IMR-90 (cell line): ENCODE measurements at regions of chr1 and their contacts with region 1.

Region 1: GRCh38 chr1:174769961-174770549 is 229.7 kb upstream of the CACYBP start:
- DNase-seq: peak; percentile 60
- ATAC-seq: peak; percentile 72
- H3K4me3 ChIP-seq: no peak overlapping the region
- H3K27ac ChIP-seq: no peak overlapping the region
- H3K4me1 ChIP-seq: no peaks in the 10 kb centered on the region
- H3K27me3 ChIP-seq: no peaks in the 10 kb centered on the region
- CTCF ChIP-seq: peak; percentile 91
- POLR2A ChIP-seq: no peak
- RAD21 ChIP-seq: peak; percentile 87

Region 2: GRCh38 chr1:174982971-174983689 is 213.1 kb after region 1 on chr1:
- CTCF ChIA-PET with region 1: interaction called, 8 read pairs
- POLR2A ChIA-PET with region 1: no interaction called
- dilution Hi-C with region 1: no loop called
- in situ Hi-C with region 1: no loop called
- intact Hi-C with region 1: loop called (anchors 1 kb)
- DNase-seq: peak; percentile 49
- ATAC-seq: peak; percentile 32
- H3K4me3 ChIP-seq: no peak overlapping the region
- H3K27ac ChIP-seq: no peak overlapping the region
- H3K4me1 ChIP-seq: no peaks in the 10 kb centered on the region
- H3K27me3 ChIP-seq: no peaks in the 10 kb centered on the region
- CTCF ChIP-seq: peak; percentile 62
- POLR2A ChIP-seq: no peak
- RAD21 ChIP-seq: peak; percentile 47

Region 3: GRCh38 chr1:174990382-174990999 is 220.4 kb after region 1 on chr1:
- CTCF ChIA-PET with region 1: no interaction called
- POLR2A ChIA-PET with region 1: no interaction called
- dilution Hi-C with region 1: no loop called
- in situ Hi-C with region 1: loop called (anchors 5 kb)
- intact Hi-C with region 1: no loop called
- DNase-seq: peak; percentile 61
- ATAC-seq: peak; percentile 83
- H3K4me3 ChIP-seq: peak overlapping the region; percentile 47; the same call in 1 of the 2 replicates
- H3K27ac ChIP-seq: peak overlapping the region; percentile 33; the same call in 1 of the 2 replicates
- H3K4me1 ChIP-seq: no peaks in the 10 kb centered on the region; the same call in 1 of the 2 replicates
- H3K27me3 ChIP-seq: no peaks in the 10 kb centered on the region
- CTCF ChIP-seq: no peak
- POLR2A ChIP-seq: no peak
- RAD21 ChIP-seq: no peak

Region 4: DNA sequence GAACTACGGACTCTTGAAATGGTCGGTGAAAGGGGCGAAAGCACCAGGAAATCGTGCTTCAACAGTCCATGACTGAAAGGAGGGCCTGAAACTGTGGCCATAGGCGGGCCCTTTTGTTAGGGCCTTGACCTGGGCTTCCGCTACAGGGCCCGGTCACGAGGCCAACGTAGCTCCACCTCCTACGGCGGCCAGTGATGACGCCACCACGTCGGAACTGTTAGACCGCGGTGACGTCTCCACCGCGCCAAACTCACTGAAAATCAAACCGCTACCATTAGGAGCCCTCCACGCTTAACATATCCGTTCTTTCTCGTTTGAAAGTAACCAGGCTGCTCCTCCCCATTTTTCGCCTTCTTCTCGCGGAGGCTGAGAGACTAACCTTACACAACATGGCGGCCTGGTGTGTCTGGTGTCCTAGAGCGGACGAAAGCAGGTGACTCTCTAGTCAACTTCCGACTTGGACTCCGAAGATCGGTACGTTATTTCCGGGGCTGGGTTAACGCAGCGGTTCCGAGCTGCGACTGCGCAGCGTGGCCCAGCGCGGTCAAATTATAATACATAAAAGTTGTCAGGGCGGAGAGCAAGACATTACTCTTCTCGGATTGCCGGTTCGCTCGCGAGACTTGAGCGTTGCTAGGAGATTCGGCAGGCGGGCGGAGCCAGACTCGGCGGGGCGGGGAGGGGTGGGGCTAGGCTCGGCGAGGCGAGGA is 229.3 kb after region 1 on chr1:
- CTCF ChIA-PET with region 1: no interaction called
- POLR2A ChIA-PET with region 1: no interaction called
- dilution Hi-C with region 1: no loop called
- in situ Hi-C with region 1: loop called (anchors 5 kb)
- intact Hi-C with region 1: loop called (anchors 1 kb)
- DNase-seq: peak; percentile 99
- ATAC-seq: peak; percentile 87
- H3K4me3 ChIP-seq: peak overlapping the region; percentile 96
- H3K27ac ChIP-seq: peak overlapping the region; percentile 91
- H3K4me1 ChIP-seq: peaks cover 2% of the 10 kb centered on the region; the same call in 1 of the 2 replicates
- H3K27me3 ChIP-seq: no peaks in the 10 kb centered on the region
- CTCF ChIP-seq: no peak
- POLR2A ChIP-seq: peak; percentile 97
- RAD21 ChIP-seq: no peak

Region 5: DNA sequence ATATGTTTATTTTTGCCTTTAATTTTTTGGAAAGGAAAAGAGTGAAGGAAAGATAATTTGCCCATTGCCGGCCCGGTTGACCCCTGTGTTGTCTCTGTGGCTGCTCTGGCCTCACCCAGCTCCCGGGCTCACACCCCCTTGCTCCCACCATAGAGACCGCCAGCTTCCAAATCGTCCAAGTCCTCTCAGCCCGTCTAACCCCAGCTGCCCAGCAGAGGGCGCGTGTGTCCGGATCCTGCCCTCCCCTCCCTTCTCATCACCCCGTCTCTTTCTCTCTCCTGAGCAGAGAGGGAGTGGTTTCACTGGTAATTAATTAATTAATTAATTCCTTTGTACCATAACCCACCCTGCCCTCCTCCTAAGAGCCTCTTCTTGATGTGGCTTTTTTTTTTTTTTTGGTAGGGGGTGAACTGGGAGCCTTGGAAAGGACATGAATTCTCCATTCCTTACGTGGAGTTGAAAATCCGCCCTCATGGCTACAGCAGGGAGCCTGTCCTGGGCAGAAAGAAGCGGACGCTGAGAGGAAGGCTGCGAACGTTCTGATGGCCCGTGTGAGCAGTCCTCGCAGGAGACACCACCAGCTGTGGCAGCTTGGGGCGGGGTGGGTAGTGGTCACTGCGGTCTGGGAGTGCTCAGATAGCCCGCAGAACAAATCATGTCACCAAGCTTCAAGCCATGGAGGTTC is 376.6 kb after region 1 on chr1:
- CTCF ChIA-PET with region 1: no interaction called
- POLR2A ChIA-PET with region 1: no interaction called
- dilution Hi-C with region 1: no loop called
- in situ Hi-C with region 1: loop called (anchors 10 kb)
- intact Hi-C with region 1: no loop called
- DNase-seq: peak; percentile 28
- ATAC-seq: peak; percentile 98
- H3K4me3 ChIP-seq: no peak overlapping the region
- H3K27ac ChIP-seq: no peak overlapping the region
- H3K4me1 ChIP-seq: no peaks in the 10 kb centered on the region
- H3K27me3 ChIP-seq: peaks cover 5% of the 10 kb centered on the region; the same call in 1 of the 2 replicates
- CTCF ChIP-seq: peak; percentile 70
- POLR2A ChIP-seq: no peak
- RAD21 ChIP-seq: no peak; the same call in 1 of the 2 replicates